ENCODE measurements at regions of chr5 and their contacts with region 1.

Region 1: GRCh38 chr5:140244525-140245025 is 58.3 kb downstream of the PFDN1 start:
- DNase-seq: peak; percentile 91 to 95 (median 91)
- ATAC-seq: peak; percentile 68
- H3K4me3 ChIP-seq: no peak overlapping the region
- H3K4me1 ChIP-seq: peaks cover 29% of the 10 kb centered on the region
- CTCF ChIP-seq: peak; percentile 74

Region 2: DNA sequence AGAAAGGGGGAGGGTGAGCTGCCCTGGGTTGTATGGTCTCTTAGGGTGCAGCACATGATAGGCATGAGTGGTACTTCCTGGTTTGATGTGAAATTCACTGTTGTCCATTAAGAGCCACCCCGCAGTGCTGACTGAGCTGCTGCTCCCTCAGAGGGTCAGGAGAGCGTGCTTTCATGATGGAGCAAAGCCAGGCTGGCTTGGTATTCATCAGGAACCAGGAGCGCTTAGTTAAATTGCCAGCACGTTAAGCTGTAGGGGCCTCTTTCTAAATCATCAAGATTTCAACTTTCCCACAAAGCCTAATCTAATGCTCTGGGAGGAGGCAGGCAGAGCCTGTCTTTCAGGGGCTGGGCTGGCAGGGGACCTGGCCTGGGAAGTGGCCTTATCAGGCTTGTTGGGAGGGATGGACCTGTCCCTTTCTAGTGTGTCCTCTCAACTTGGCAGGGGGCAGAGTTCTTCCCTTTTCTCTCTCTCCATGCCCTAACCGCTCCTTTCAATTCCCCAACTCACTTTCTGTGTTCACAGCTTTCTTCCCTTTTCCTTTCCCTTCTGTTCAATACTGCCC is 61.7 kb before region 1 on chr5:
- intact Hi-C with region 1: loop called in 1 of 2 experiments (anchors 10 kb)
- DNase-seq: peak in 2 of 3 donors; percentile 55 to 64
- ATAC-seq: peak; percentile 71
- H3K4me3 ChIP-seq: no peak overlapping the region
- H3K4me1 ChIP-seq: peaks cover 43% of the 10 kb centered on the region
- CTCF ChIP-seq: no peak

Region 3: GRCh38 chr5:140351609-140352334 is 107.2 kb after region 1 on chr5:
- intact Hi-C with region 1: loop called (anchors 5 kb)
- DNase-seq: peak in 1 of 3 donors; percentile 91
- ATAC-seq: no peak
- H3K4me3 ChIP-seq: no peak overlapping the region
- H3K4me1 ChIP-seq: peaks cover 28% of the 10 kb centered on the region
- CTCF ChIP-seq: peak; percentile 70

Region 4: GRCh38 chr5:140357726-140358093 is 113.1 kb after region 1 on chr5:
- intact Hi-C with region 1: loop called (anchors 5 kb)
- DNase-seq: peak; percentile 87 to 90 (median 89)
- ATAC-seq: peak; percentile 97
- H3K4me3 ChIP-seq: no peak overlapping the region
- H3K4me1 ChIP-seq: peaks cover 2% of the 10 kb centered on the region
- CTCF ChIP-seq: peak; percentile 81

Measured in mucosa of descending colon (tissue), 3 donors.